ENCODE measurements at regions of chrX and their contacts with region 1.

Region 1: DNA sequence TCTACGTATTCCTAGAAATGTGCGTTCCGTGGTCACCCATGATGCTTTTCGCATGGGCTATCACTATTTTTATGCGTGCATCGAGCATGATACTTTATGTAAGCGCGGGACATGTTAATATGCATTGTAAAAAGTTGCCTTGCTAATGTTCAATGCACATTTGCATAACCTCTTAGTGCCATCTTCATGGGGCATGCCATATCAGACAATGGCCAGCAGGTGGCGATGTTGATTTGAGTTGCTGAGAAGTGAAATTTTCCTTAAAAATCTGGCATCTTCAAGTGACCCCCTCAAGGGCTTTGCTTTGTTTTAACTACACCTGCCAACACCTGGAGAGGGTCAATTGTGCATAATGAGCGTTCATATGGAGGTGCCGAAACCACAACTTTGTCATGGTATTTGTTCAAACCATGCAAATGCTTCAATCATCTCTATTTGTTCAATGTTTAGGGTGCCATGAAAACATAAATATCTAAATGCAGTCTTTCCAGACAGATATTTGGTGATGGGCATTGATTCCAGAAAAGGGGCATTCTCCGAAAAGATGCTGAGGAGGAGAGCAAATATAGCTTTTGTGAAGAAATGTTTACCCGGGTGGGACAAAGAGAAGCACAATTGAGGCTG is 833.9 kb upstream of the PRKX start:
- DNase-seq: peak; percentile 53 to 70
- ATAC-seq: no peak
- H3K4me3 ChIP-seq: no peak overlapping the region
- H3K27ac ChIP-seq: no peak overlapping the region
- H3K4me1 ChIP-seq: no peaks in the 10 kb centered on the region
- H3K27me3 ChIP-seq: no peaks in the 10 kb centered on the region

Region 2: DNA sequence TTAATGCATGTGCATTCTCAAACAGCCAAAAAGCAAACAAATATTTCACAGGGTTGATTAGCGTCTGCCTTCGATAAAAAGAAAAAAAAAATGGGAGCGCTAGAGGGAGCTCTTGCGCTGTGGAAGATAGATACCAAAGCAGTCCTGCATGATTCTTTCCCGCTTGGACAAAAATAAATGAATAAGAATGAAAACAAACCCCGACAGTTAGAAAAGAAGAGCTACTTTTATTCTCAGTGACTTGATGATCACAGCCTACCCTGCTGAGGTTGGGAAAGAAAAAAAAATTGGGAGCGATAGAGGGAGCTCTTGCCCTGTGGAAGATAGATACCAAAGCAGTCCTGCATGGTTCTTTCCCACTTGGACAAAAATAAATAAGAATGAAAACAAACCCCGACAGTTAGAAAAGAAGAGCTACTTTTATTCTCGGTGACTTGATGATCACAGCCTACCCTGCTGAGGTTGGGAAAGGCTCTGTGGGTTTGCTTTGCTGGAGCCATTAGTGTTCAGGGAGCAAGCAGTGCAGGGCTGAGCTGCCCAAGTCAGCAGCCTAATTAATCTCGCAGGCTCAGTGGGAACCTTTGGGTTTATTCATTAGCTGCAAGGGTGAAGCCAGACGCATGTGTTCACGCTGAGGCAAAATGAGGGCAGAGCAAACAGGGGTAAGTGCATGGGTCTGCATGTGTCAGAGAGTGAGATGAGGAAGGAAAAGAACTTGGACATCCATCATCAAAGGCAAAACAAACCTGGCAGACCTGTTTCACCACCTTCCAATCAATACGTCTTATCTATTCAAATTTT is 584.6 kb before region 1 on chrX:
- intact Hi-C with region 1: loop called in 1 of 2 experiments (anchors 5 kb)
- DNase-seq: no peak
- ATAC-seq: no peak
- H3K4me3 ChIP-seq: no peak overlapping the region
- H3K27ac ChIP-seq: no peak overlapping the region
- H3K4me1 ChIP-seq: no peaks in the 10 kb centered on the region
- H3K27me3 ChIP-seq: peaks cover 0 to 2% of the 10 kb centered on the region in 2 donors

Region 3: DNA sequence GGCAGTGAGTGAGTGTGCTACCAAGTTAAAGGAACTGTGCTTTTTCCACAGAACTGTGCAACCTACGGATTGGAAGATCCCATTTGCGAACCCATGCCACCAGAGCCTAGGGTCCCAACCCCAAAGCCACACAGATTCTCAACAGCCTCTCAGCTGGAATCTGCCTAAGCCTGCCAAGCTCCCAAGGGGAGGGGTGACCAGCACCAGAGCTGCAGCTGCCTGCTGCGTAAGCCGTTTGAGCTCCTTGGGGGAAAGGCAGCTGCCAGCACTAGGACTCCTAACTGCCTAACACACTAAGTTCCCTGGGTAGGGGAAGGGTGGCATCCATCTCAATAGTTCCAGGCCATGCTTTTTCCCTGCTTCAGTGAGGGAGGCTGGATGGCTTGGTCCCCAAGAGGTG is 95.7 kb before region 1 on chrX:
- intact Hi-C with region 1: no loop called
- DNase-seq: no peak
- ATAC-seq: no peak
- H3K4me3 ChIP-seq: no peak overlapping the region
- H3K27ac ChIP-seq: no peak overlapping the region
- H3K4me1 ChIP-seq: no peaks in the 10 kb centered on the region
- H3K27me3 ChIP-seq: no peaks in the 10 kb centered on the region

Region 4: DNA sequence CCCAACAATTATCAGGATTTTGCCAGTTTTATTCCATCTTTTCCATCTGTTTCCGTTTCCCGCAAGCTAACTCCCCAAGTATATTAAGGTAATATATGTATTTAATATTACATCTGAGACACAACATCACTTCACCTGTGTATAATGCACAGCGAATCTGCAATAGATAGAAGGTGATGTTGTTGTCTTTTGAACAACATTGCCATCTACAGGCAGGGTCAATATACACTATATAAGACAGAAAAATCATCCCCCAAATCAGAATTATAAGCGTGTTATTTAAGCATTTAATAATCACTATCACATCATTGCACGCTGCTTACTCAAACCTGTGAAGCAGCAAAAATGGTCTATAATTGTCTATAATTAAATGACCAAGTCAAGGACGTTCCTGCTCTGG is 565.8 kb after region 1 on chrX:
- intact Hi-C with region 1: loop called (anchors 2 to 10 kb)
- DNase-seq: no peak
- ATAC-seq: no peak
- H3K4me3 ChIP-seq: no peak overlapping the region
- H3K27ac ChIP-seq: no peak overlapping the region
- H3K4me1 ChIP-seq: no peaks in the 10 kb centered on the region
- H3K27me3 ChIP-seq: no peaks in the 10 kb centered on the region

Measured in aorta (tissue), 5 donors.